Mammary epithelial cell (primary cell): ENCODE measurements at regions of chr2 and their contacts with region 1.

Region 1: GRCh38 chr2:219736209-219736608 is 108.8 kb downstream of the SLC4A3 start:
- DNase-seq: peak; percentile 67
- H3K4me3 ChIP-seq: no peak overlapping the region
- H3K27ac ChIP-seq: no peak overlapping the region
- H3K4me1 ChIP-seq: peaks cover 12% of the 10 kb centered on the region
- H3K27me3 ChIP-seq: no peaks in the 10 kb centered on the region
- CTCF ChIP-seq: peak; percentile 47 to 62

Region 2: DNA sequence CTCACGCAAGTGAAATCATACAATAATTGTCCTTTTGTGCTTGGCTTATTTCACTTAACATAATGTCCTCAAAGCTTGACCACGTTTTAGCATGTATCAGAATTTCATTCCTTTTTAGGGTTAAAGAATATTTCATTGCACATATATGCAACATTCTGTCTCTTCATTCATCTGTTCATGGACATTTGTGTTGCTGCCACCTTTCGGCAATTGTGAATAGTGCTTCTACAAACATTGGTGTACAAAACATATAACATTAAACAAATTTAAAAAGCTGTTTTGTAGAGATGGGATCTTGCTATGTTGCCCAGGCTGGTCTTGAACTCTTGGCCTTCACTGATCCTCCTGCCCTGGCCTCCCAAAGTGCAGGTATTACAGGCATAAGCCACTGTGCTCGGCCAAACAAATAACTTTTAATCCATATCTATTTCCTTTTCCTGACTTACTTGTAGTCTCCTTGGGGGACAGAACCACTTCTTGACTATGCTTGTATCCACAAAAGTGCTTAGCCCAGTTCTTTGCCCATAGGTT is 100.5 kb after region 1 on chr2:
- CTCF ChIA-PET with region 1: no interaction called
- dilution Hi-C with region 1: no loop called
- in situ Hi-C with region 1: loop called in 1 of 2 experiments (anchors 10 kb)
- intact Hi-C with region 1: loop called (anchors 1 kb)
- DNase-seq: peak; percentile 31
- H3K4me3 ChIP-seq: no peak overlapping the region
- H3K27ac ChIP-seq: no peak overlapping the region
- H3K4me1 ChIP-seq: no peaks in the 10 kb centered on the region
- H3K27me3 ChIP-seq: no peaks in the 10 kb centered on the region
- CTCF ChIP-seq: peak; percentile 26 to 40

Region 3: DNA sequence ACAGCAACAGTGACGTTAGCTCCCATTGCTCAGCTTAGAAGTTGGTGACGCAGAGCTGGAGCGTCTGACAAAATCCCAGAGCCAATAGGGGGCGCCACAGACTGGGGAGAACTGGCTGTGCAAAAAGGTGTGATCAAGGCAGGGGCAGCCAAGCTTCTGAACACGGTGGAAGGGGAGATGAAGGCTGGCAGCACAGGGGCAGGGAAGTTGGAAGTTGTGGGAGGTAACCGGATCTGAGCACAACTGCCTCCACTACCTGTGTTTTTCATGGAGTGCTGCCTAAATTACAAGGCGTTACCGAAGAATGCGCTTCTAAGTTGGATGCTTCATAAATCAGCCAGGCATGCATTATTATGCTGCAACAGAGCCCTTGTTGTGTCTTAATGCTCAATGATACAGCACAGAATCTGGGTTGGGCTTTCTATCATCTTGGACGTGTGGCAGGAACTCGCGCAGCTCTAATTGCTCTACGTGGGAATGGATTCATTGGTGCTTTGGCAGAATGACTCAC is 261.2 kb after region 1 on chr2:
- CTCF ChIA-PET with region 1: no interaction called
- dilution Hi-C with region 1: no loop called
- in situ Hi-C with region 1: loop called in 1 of 2 experiments (anchors 25 kb)
- intact Hi-C with region 1: loop called (anchors 1 kb)
- DNase-seq: peak; percentile 11
- H3K4me3 ChIP-seq: no peak overlapping the region
- H3K27ac ChIP-seq: no peak overlapping the region
- H3K4me1 ChIP-seq: no peaks in the 10 kb centered on the region
- H3K27me3 ChIP-seq: no peaks in the 10 kb centered on the region
- CTCF ChIP-seq: peak; percentile 46 to 65

Region 4: DNA sequence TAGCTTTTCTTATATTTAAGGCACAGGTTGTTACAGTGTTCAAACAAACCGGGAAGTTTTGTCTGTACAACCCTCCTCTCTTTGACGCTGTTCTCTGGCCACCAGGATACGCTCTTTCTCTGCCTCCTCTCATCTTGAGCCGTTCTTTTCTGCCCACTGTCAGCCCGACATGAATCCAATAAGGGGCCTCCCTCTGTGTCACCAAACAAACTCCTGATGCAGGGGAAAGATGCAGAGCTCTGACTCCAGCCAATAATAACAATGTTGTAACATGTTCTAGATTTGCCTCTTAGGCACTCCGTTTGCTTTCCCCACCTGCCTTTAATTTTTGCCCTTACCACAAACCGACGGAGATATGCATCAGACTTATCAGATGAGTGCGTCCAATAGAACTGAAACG is 340.5 kb after region 1 on chr2:
- CTCF ChIA-PET with region 1: no interaction called
- dilution Hi-C with region 1: no loop called
- in situ Hi-C with region 1: no loop called
- intact Hi-C with region 1: loop called (anchors 1 kb)
- DNase-seq: peak; percentile 79
- H3K4me3 ChIP-seq: no peak overlapping the region
- H3K27ac ChIP-seq: no peak overlapping the region
- H3K4me1 ChIP-seq: peaks cover 6% of the 10 kb centered on the region
- H3K27me3 ChIP-seq: no peaks in the 10 kb centered on the region
- CTCF ChIP-seq: peak; percentile 26 to 65

Region 5: DNA sequence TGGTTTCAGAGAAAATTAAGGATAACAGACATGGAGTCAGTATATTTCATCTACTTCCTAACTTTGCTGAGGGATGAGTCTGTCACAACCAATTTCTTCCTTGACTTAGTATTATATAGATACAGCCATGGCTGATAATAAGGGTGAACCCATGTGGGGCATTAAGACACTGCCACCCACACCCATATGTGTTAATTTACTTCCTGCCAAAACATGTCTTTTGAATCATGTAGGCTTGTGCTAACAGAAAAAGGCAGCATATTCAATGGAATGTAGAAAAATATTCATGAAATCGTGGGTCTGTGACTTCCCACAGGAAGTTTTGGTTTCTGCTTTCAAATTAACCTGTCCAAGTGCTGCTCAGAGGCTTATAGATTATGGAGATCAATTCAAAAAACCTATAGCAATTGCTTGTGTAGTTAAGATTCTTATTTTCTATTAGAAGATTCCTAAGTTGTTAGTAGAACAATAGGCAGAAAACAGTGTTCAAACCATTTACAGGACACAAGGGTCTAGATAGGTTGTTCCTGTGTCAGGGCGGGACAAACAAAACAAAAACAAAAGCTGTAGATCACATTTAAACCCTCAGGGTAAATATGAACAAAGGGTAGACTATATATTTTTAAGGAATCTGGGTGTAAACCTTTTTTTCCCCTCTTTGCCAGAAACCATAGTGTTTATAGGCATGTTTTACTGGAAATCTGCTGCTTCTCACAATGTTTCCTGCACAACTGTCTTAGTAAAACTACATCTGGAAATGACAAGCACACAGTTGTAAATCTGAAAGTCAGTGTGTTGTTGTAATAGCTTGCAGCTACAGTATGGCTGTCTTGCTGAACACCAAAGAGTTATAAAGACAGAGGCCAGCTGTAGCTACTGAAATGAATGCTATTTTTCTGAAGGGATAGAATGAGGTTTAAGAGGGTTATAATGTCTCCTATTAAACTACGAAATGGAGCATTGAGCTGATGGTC is 1144.7 kb after region 1 on chr2:
- CTCF ChIA-PET with region 1: no interaction called
- dilution Hi-C with region 1: no loop called
- in situ Hi-C with region 1: no loop called
- intact Hi-C with region 1: loop called (anchors 10 kb)
- DNase-seq: peak; percentile 52
- H3K4me3 ChIP-seq: no peak overlapping the region
- H3K27ac ChIP-seq: peak overlapping the region; percentile 63
- H3K4me1 ChIP-seq: peaks cover 13% of the 10 kb centered on the region
- H3K27me3 ChIP-seq: no peaks in the 10 kb centered on the region
- CTCF ChIP-seq: no peak